WTC11 (cell line): ENCODE measurements at regions of chr11 and their contacts with region 1.

Region 1: GRCh38 chr11:65859200-65859811 is 927 bp upstream of the MUS81 start:
- DNase-seq: peak; percentile 100
- ATAC-seq: peak; percentile 67
- H3K4me3 Mint-ChIP-seq: peak overlapping the region; percentile 90
- H3K27ac Mint-ChIP-seq: peak overlapping the region; percentile 100
- H3K4me1 Mint-ChIP-seq: peaks cover 23% of the 10 kb centered on the region
- H3K27me3 Mint-ChIP-seq: no peaks in the 10 kb centered on the region
- CTCF ChIP-seq: no peak

Region 2: DNA sequence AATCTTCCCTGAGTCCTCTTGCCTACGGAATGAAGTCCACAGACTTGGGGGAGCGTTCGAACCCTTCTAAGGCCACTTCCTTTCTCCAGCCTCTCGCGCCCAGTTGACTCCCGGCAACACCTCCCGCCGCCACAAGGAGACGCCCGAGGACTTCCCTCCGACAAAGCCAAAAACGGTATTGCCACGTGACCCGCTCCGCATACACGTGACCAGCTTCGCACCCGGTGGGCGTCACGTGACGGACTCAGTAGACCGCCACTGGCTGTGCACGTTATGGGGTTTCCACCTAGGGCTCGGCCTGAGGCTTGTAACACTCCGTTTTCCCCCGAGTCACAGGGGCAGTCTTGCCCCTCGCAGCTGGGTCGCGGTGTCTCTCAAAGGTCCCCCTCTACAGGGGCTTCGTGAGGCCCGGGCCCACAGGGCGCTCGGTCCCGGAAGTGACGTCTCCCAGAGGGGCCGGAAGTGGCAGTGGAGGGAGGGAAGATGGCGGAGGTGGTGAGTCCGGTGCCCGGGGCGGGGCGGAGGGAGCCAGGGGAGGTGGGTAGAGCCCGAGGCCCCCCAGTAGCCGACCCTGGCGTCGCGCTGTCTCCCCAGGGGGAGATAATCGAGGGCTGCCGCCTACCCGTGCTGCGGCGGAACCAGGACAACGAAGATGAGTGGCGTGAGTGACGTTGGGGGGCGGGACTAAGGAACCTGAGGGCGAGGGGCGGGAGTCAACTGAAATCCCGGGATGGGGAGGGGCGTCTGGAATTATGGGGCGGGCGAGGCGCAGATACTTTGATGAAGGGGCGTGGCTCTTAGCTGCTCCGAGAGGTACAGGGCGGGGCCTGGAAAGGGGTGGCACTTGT is 147.3 kb before region 1 on chr11 and contains the start of gene KAT5:
- CTCF ChIA-PET with region 1: interaction called, 20 read pairs
- POLR2A ChIA-PET with region 1: interaction called, 18 read pairs
- DNase-seq: peak; percentile 99
- ATAC-seq: peak; percentile 93
- H3K4me3 Mint-ChIP-seq: peak within 1 kb of the TSS; percentile 82
- H3K27ac Mint-ChIP-seq: peak within 1 kb of the TSS; percentile 96
- H3K4me1 Mint-ChIP-seq: 0 out of 2 replicates have a peak, but pooled peaks cover 3% of the 10 kb centered on the region
- H3K27me3 Mint-ChIP-seq: peaks cover 6% of the 10 kb centered on the region
- CTCF ChIP-seq: peak; percentile 86
- total RNA-seq, gene KAT5: 44.9 to 56.6 TPM (median 46.0 TPM) in 3 replicates

Region 3: GRCh38 chr11:65817835-65818742 is 41.2 kb before region 1 on chr11:
- CTCF ChIA-PET with region 1: interaction called, 10 read pairs
- POLR2A ChIA-PET with region 1: no interaction called
- DNase-seq: peak; percentile 96
- ATAC-seq: peak; percentile 87
- H3K4me3 Mint-ChIP-seq: peak overlapping the region; percentile 72
- H3K27ac Mint-ChIP-seq: no peak overlapping the region
- H3K4me1 Mint-ChIP-seq: 0 out of 2 replicates have a peak, but pooled peaks cover 5% of the 10 kb centered on the region
- H3K27me3 Mint-ChIP-seq: peaks cover 15% of the 10 kb centered on the region
- CTCF ChIP-seq: peak; percentile 100

Region 4: GRCh38 chr11:65879617-65880016 is 20.3 kb after region 1 on chr11 and contains the start of gene CTSW:
- CTCF ChIA-PET with region 1: interaction called, 539 read pairs
- POLR2A ChIA-PET with region 1: interaction called, 10 read pairs
- DNase-seq: no peak
- ATAC-seq: no peak
- H3K4me3 Mint-ChIP-seq: no peak within 1 kb of the TSS
- H3K27ac Mint-ChIP-seq: no peak within 1 kb of the TSS
- H3K4me1 Mint-ChIP-seq: peaks cover 2% of the 10 kb centered on the region
- H3K27me3 Mint-ChIP-seq: peaks cover 14% of the 10 kb centered on the region
- CTCF ChIP-seq: no peak
- total RNA-seq, gene CTSW: 0.18 TPM in 1 of 3 replicates, not detected in the others

Region 5: DNA sequence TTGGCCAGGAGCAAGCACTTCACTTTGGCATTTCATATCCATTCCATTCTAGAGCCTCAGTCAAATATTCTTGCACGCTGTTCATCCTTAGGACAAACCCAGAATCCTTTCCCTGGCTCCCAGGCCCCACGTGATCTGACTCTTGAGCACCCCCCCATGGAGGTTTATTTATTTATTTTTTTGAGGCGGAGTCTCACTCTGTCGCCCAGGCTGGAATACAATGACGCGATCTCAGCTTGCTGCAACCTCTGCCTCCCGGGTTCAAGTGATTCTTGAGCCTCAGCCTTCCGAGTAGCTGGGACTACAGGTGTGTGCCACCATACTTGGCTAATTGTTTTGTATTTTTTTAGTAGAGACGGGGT is 73.2 kb after region 1 on chr11:
- CTCF ChIA-PET with region 1: interaction called, 14 read pairs
- POLR2A ChIA-PET with region 1: interaction called, 6 read pairs
- DNase-seq: peak; percentile 37
- ATAC-seq: peak; percentile 75
- H3K4me3 Mint-ChIP-seq: peak overlapping the region; percentile 22; the same call in 1 of the 2 replicates
- H3K27ac Mint-ChIP-seq: no peak overlapping the region; the same call in 1 of the 2 replicates
- H3K4me1 Mint-ChIP-seq: peaks cover 21% of the 10 kb centered on the region
- H3K27me3 Mint-ChIP-seq: no peaks in the 10 kb centered on the region
- CTCF ChIP-seq: no peak